ENCODE measurements at regions of chr10 and their contacts with region 1.

Region 1: DNA sequence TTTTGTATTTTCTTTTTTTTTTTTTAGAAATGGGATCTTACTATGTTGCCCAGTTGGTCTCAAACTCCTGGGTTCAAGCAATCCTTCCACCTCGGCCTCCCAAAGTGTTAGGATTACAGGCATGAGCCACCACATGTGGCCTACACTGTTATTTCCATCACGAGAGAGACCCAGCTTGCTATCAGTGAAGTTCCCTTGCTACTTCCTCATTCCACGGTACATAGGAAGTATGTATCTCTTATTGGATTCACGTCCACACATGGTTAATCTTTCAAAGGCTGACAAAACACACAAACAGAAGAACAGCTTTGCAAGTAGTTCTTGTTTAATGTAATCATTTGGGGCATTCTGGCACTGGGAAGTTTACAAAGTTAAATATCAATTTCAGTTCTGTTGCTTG is 50.9 kb downstream of the DCLRE1A start:
- DNase-seq: no peak
- H3K4me3 ChIP-seq: no peak overlapping the region
- H3K27ac ChIP-seq: no peak overlapping the region
- H3K4me1 ChIP-seq: no peaks in the 10 kb centered on the region
- H3K27me3 ChIP-seq: no peaks in the 10 kb centered on the region
- CTCF ChIP-seq: no peak

Region 2: GRCh38 chr10:113704637-113705343 is 98.2 kb before region 1 on chr10:
- intact Hi-C with region 1: loop called (anchors 10 kb)
- DNase-seq: no peak
- H3K4me3 ChIP-seq: no peak overlapping the region
- H3K27ac ChIP-seq: no peak overlapping the region
- H3K4me1 ChIP-seq: peaks cover 0 to 6% (median 2%) of the 10 kb centered on the region in 4 donors
- H3K27me3 ChIP-seq: no peaks in the 10 kb centered on the region
- CTCF ChIP-seq: peak; percentile 47 to 58

Region 3: GRCh38 chr10:113720386-113720785 is 82.6 kb before region 1 on chr10:
- intact Hi-C with region 1: no loop called
- DNase-seq: no peak
- H3K4me3 ChIP-seq: no peak overlapping the region
- H3K27ac ChIP-seq: no peak overlapping the region
- H3K4me1 ChIP-seq: no peaks in the 10 kb centered on the region
- H3K27me3 ChIP-seq: no peaks in the 10 kb centered on the region
- CTCF ChIP-seq: no peak

Measured in tibial artery (tissue), 4 donors.